Sciatic nerve (tissue), 2 donors: ENCODE measurements at regions of chr19 and their contacts with region 1.

Region 1: GRCh38 chr19:5138606-5139582 is 170.0 kb downstream of the KDM4B start:
- DNase-seq: no peak
- ATAC-seq: peak; percentile 21

Region 2: DNA sequence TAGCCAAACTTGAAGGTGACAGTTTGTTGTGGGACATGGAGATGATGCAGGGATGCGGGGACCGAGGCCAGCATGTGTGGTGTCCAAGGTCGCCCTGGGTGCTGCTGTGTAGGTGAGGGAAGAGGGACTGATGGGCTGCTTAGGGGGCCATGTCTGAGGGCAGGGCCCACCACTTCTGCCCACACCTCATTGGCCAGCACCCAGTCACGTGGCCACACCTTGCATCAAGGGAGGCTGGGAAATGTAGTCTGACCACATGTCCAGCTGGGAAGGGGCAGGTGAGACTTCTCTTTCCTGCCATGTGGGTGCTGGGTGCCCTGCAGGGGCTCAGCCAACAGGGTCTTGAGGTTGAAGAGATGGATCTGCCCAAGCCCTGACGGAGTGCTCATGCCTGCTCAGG is 81.0 kb before region 1 on chr19:
- intact Hi-C with region 1: loop called (anchors 10 kb)
- DNase-seq: no peak
- ATAC-seq: peak; percentile 61